CD8-positive, alpha-beta T cell (primary cell): ENCODE measurements at regions of chr14 and their contacts with region 1.

Region 1: GRCh38 chr14:73935666-73936065 is 14.2 kb downstream of the FAM161B start:
- DNase-seq: peak in 1 of 9 experiments; percentile 18
- ATAC-seq: no peak
- H3K4me3 ChIP-seq: no peak overlapping the region
- H3K4me3 Mint-ChIP-seq: no peak overlapping the region
- H3K27ac ChIP-seq: peak overlapping the region in 1 of 2 experiments; percentile 18
- H3K27ac Mint-ChIP-seq: no peak overlapping the region
- H3K4me1 ChIP-seq: no peaks in the 10 kb centered on the region
- H3K4me1 Mint-ChIP-seq: peaks cover 11% of the 10 kb centered on the region
- H3K27me3 ChIP-seq: no peaks in the 10 kb centered on the region
- H3K27me3 Mint-ChIP-seq: no peaks in the 10 kb centered on the region
- CTCF ChIP-seq: peak; percentile 33

Region 2: DNA sequence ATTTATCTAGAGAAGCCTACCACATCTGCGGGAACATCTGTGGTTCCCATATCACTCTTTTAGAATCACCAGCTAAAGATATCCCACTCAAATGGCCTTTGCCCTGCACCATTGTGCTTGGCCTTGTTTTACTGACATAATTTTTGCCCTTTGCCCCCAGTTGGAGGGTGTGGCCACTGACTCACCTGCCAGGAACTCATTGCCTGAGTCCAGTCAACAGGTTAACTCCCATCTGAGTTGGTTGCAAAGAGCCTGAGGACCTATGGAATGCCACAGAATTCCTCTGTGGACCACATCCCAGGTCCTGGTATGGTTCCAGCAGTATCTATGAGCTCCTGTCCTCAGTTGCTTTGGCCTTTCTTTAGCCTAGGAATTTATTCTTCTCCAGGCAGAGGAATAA is 139.7 kb before region 1 on chr14:
- CTCF ChIA-PET with region 1: no interaction called
- POLR2A ChIA-PET with region 1: no interaction called
- intact Hi-C with region 1: loop called in 1 of 2 experiments (anchors 5 kb)
- DNase-seq: no peak
- ATAC-seq: no peak
- H3K4me3 ChIP-seq: no peak overlapping the region
- H3K4me3 Mint-ChIP-seq: no peak overlapping the region
- H3K27ac ChIP-seq: no peak overlapping the region
- H3K27ac Mint-ChIP-seq: no peak overlapping the region
- H3K4me1 ChIP-seq: no peaks in the 10 kb centered on the region
- H3K4me1 Mint-ChIP-seq: no peaks in the 10 kb centered on the region
- H3K27me3 ChIP-seq: no peaks in the 10 kb centered on the region
- H3K27me3 Mint-ChIP-seq: peaks cover 2% of the 10 kb centered on the region
- CTCF ChIP-seq: no peak